Heart left ventricle (tissue), 16 donors: ENCODE measurements at regions of chr14 and their contacts with region 1.

Region 1: DNA sequence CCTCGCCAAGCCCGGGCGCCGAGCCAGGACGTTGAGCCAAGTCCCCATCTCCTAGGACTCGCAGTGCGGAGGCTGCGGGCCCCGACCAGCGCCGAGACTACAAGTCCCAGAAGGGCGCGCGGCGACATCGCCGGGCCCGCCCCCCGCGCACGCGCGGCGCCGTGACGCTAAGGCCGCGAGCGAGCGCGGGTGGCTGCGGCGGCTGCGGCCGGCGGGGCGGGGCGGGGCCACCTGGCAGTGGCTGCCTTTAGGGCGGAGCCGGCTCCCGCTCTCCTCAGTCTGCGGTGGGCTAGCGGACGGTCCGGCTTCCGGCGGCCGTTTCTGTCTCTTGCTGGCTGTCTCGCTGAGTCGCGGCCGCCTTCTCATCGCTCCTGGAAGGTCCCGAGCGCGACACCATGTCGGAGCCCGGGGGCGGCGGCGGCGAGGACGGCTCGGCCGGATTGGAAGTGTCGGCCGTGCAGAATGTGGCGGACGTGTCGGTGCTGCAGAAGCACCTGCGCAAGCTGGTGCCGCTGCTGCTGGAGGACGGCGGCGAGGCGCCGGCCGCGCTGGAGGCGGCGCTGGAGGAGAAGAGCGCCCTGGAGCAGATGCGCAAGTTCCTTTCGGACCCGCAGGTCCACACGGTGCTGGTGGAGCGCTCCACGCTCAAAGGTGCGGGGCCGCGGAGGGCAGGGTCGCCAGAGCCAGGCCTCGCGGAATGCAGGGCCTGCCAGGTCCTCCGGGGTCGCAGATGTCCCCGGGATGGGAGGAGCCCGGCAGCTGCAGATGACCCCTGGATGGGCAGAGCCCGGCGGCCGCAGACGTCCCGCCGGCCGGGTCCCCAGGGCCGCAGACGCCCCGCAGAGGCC is at the start of gene DYNC1H1:
- DNase-seq: peak; percentile 93 to 97 (median 97)
- ATAC-seq: peak; percentile 85 to 93 (median 91)
- H3K4me3 ChIP-seq: peak within 1 kb of the TSS; percentile 76 to 100 (median 99)
- H3K27ac ChIP-seq: peak within 1 kb of the TSS; percentile 82 to 98 (median 96)
- H3K4me1 ChIP-seq: peaks cover 0 to 59% (median 40%) of the 10 kb centered on the region in 12 donors
- H3K27me3 ChIP-seq: no peaks in the 10 kb centered on the region
- CTCF ChIP-seq: no peak
- POLR2A ChIP-seq: peak; percentile 99 to 100
- total RNA-seq, gene DYNC1H1: 291 to 942 (median 603) TPM

Region 2: DNA sequence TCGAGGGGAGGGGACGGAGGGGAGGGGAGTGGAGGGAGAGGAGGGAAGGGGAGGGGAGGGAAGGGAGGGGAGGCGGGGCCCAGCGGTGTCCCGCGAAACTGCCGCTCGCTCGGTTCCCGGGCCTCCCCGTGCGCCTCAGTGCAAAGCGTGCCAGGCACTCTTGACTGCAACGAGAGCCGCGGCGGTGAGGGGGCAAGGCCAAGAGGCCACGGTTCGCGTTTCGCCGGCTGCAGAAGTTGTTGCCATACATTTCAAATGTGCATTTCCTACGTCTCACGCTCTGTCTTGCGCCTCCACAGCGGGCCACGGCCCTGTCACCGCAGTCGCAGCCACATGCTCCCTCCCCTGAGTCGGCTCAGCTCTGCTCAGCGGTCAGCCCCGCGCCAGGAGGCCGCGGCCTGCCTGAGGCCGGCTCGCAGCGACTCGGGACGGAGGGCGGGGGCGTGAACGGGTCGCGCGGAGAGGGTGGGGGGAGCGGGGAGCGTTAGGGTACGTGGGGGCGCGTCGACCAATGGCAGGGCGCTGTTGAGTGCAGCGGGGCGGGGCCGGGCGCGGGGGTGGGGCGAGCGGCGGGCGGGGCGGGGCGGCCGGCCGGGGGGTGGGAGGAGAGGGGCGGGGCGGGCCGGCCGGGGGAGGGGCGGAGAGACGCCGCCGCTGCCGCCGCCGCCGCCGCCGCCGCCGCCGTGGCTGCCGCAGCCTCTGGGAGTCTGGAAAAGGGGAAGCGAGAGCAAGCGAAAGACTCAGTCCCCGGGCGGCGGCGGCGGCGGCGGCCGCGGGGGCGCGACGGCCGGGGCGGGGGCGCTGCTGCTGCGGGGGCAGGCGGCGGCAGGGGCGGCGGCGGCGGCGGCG is 203.3 kb before region 1 on chr14 and contains the start of gene PPP2R5C:
- intact Hi-C with region 1: loop called in 1 of 10 experiments (anchors 5 kb)
- DNase-seq: peak; percentile 94 to 97 (median 95)
- ATAC-seq: peak; percentile 73 to 89 (median 88)
- H3K4me3 ChIP-seq: peak within 1 kb of the TSS; percentile 65 to 100 (median 98)
- H3K27ac ChIP-seq: peak within 1 kb of the TSS; percentile 46 to 99 (median 95)
- H3K4me1 ChIP-seq: peaks cover 0 to 30% (median 11%) of the 10 kb centered on the region in 12 donors
- H3K27me3 ChIP-seq: no peaks in the 10 kb centered on the region
- CTCF ChIP-seq: no peak
- POLR2A ChIP-seq: peak in 1 of 2 donors; percentile 71
- total RNA-seq, gene PPP2R5C: 116 to 248 (median 207) TPM

Region 3: GRCh38 chr14:101947906-101948665 is 16.4 kb before region 1 on chr14:
- intact Hi-C with region 1: loop called in 2 of 10 experiments (anchors 1 kb)
- DNase-seq: peak; percentile 100
- ATAC-seq: peak; percentile 98 to 99 (median 99)
- H3K4me3 ChIP-seq: peak overlapping the region; percentile 62 to 91 (median 74)
- H3K27ac ChIP-seq: peak overlapping the region; percentile 89 to 100 (median 97)
- H3K4me1 ChIP-seq: peaks cover 0 to 25% (median 13%) of the 10 kb centered on the region in 12 donors
- H3K27me3 ChIP-seq: no peaks in the 10 kb centered on the region
- CTCF ChIP-seq: no peak
- POLR2A ChIP-seq: peak; percentile 81 to 94

Region 4: DNA sequence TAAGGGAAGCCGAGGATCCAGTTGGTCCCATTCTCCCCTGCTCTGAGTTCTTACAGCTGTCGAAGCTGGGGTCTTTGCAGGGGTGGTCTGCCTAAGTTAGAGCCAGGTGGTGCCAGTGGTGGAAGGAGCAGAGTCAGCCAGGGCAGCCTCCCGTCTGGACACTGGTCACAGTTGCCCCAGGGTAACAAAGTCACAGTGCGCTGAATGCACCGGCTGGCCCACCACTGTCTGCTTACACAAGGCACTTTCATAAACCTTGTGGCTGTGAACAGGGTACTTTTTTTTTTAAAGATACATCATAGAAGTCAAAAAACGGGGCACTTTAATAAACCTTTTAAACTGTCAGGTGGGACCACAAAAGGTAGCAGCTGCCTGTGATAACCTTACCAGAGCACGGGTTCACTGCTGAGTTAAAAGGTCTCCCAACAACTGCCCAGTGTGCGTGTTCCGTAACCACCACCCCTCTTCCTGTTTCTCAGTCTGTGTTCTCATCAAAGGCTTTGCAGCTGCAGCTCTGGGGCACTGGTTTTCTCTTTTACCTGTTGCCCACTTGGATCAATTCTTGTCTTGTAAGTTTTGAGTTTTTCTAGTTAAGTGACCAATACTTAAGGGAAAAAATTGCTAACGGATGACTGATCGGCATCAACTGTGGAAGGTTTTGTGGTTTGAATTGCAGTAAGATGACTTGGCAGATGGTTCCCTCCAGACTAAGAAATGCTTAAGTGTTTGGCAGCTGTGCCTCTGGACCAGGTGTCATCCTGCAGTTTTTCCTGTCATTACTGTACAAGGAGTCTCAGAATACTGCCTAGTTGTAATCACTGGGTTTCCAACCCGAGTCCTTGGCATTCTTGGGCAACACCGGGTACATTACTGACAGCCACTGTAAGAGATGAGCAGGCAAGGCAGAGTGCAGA is 55.8 kb after region 1 on chr14:
- intact Hi-C with region 1: no loop called
- DNase-seq: no peak
- ATAC-seq: no peak
- H3K4me3 ChIP-seq: no peak overlapping the region
- H3K27ac ChIP-seq: no peak overlapping the region
- H3K4me1 ChIP-seq: no peaks in the 10 kb centered on the region
- H3K27me3 ChIP-seq: no peaks in the 10 kb centered on the region
- CTCF ChIP-seq: no peak
- POLR2A ChIP-seq: no peak

Region 5: DNA sequence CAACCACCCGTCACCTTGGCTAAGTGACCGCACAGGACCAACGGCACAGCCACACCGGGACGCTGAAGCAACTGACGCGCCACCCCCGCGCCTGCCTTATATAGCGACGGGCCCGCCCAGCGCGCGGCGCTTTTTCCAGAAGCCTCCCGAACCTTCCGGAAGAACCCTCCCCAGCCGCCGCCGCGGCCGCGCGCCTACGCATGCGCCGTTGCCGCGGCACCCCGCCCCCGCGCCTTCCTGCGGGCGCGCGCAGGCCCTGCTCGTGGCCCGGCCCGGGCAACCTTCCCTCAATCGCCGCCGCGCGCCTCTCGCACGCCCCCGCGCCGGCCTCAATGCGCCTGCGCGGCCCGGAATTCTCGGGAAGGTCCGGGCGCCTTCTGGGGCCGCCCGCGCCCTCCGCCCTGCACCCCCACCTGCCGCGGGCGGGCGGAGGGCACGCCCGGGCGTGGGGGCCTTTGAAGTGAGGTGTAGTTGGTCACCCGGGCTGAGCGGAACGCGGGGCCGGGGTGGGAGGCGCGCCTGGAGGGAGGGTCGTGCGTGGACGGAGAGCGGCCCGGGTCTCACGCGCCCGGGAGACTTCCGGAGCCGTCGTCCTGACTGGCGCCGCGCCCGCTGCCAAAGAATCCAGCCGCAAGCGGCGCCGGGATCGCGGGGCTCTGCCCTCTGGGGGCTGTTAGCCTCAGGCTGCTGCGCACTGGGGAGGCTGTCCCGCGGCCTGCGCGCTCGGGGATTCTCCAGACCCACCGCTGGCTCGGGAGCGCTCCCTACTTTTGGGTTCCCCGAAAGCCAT is 122.6 kb after region 1 on chr14 and contains the start of gene HSP90AA1:
- intact Hi-C with region 1: loop called in 3 of 10 experiments (anchors 5 to 10 kb)
- DNase-seq: peak; percentile 94 to 97 (median 96)
- ATAC-seq: peak; percentile 71 to 93 (median 86)
- H3K4me3 ChIP-seq: peak within 1 kb of the TSS; percentile 73 to 99 (median 92)
- H3K27ac ChIP-seq: peak within 1 kb of the TSS; percentile 98 to 100 (median 100)
- H3K4me1 ChIP-seq: peaks cover 14 to 53% (median 39%) of the 10 kb centered on the region in 12 donors
- H3K27me3 ChIP-seq: no peaks in the 10 kb centered on the region
- CTCF ChIP-seq: peak in 5 of 12 donors; percentile 13 to 54 (median 36)
- POLR2A ChIP-seq: peak; percentile 61 to 97
- total RNA-seq, gene HSP90AA1: 351 to 854 (median 427) TPM

Region 6: DNA sequence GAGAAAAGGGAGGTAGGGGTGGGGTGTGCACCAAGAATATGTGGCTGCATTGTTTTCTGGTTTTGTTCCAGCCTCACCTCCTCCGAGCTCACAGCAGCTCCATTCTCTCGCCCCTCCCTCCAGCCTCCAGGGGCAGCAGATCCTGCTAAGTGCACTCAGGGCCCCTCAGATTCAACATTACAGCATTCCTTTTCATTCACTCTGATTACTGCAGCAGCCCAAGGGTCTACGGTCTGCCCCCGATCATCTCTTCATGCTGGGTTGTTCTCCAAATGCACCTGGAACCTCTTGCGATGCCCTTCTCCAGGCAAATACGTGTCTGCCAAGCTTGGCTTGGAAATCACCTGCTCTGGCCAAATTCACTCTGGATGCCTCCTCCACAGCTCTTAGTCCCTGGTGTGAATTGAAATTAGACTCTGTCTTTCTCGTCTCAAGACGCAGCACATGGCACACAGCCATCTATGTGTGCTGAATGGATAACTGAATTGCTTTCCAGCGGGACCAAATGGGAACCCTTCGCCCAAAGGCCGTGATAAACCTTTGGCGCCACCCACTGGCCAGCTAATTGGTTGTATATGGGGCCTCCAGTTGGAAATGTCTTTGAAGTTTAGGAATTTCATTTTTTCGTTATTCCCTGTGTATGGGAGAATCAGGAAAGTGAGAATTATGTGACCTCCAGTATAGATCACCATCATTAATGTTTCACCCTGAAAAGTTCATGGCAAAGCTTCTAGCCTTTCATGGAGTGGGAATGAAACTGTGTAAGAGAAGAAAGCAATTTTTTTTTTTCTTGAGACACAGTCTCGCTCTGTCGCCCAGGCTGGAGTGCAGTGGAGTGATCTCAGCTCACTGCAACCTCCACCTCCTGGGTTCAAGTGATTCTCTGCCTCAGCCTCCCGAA is 131.9 kb after region 1 on chr14:
- intact Hi-C with region 1: loop called in 7 of 10 experiments (anchors 2 to 5 kb)
- DNase-seq: peak; percentile 83 to 91 (median 87)
- ATAC-seq: peak; percentile 81 to 91 (median 86)
- H3K4me3 ChIP-seq: no peak overlapping the region
- H3K27ac ChIP-seq: no peak overlapping the region
- H3K4me1 ChIP-seq: peaks cover 0 to 9% (median 0%) of the 10 kb centered on the region in 12 donors
- H3K27me3 ChIP-seq: no peaks in the 10 kb centered on the region
- CTCF ChIP-seq: peak; percentile 69 to 91 (median 83)
- POLR2A ChIP-seq: no peak

Region 7: DNA sequence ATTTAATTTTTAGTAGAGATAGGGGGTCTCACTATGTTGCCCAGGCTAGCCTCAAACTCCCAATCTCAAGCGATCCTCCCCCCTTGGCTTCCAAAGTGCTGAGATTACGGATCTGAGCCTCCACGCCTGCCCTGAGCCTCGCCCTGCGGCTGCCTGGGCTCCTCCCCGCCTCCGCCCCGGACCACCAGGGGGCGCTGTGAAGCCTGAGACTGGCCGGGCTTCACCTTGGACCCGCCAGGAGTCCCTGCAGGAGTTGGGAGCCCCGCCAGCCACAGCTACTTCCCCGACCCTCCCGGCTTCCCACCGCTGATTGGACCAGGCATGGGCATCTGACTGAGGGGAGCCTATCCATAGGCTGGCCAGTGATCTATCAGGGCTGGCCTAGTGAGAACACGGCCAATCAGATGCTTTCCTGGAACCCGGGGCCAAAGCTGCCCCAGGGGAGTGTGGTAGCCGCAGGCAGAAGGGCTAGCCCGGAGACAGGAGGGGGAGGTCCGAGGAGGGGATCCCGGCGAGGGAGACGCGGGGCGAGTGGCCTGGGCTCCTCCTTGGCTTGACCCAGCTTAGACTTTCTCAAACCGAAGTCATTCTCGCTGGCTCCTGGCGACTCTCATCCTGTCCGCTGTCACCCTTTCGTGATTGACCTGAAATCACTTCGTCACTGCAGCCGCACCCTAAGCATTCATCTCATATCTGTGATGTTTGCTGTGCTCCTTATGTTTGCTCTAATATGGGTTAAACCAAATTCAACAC is 560.1 kb after region 1 on chr14:
- intact Hi-C with region 1: no loop called
- DNase-seq: peak; percentile 99 to 100 (median 100)
- ATAC-seq: peak; percentile 97 to 99 (median 99)
- H3K4me3 ChIP-seq: peak overlapping the region; percentile 38 to 73 (median 63)
- H3K27ac ChIP-seq: peak overlapping the region; percentile 63 to 89 (median 81)
- H3K4me1 ChIP-seq: peaks cover 0 to 28% (median 8%) of the 10 kb centered on the region in 12 donors
- H3K27me3 ChIP-seq: no peaks in the 10 kb centered on the region
- CTCF ChIP-seq: peak; percentile 97 to 100 (median 99)
- POLR2A ChIP-seq: peak in 1 of 2 donors; percentile 70